ENCODE measurements at regions of chr1 and their contacts with region 1.

Region 1: DNA sequence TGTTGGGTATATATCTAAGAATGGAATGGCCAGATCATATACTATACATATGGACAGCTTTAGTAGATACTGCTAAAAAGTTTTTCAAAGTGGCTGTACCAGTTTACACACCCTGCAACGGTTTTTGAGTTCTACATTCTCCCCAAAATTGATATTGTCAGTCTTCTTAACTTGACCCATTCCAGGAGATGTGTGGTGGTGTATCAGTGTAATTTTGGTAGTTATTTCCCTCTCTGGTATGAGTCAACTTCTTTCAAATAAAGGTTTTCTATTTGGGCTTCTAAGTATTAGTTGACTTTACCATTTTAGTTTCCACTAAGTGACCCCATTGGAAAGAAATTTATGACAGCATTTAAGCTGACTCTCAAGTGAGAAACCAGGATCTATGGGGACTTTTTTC is 29.2 kb downstream of the INKA2 start:
- DNase-seq: no peak
- ATAC-seq: no peak
- H3K4me3 ChIP-seq: no peak overlapping the region
- H3K27ac ChIP-seq: no peak overlapping the region
- H3K4me1 ChIP-seq: peaks cover 0 to 4% (median 0%) of the 10 kb centered on the region in 12 donors
- H3K27me3 ChIP-seq: no peaks in the 10 kb centered on the region
- CTCF ChIP-seq: no peak
- POLR2A ChIP-seq: no peak

Region 2: DNA sequence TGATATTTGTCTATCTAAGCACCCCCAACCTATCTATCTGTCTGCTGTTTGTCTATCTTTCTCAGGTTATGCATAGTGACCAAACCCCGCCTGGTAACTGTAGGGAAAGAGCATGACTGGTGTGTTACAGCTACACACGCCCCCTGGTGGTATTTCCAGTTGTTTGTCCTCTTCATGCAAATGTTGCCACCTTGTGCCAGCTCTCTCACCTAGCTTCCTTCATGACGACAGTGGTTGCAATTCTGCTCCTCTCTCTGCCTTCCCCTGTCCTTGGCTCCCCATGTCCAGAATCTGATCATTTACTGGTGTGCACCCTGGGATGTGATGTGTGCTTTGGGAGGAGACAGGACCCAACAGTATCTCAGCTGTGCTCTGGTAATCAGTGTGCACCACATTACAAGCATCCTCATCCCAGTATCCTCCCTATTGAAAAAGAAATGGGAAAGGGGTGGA is 37.3 kb after region 1 on chr1:
- intact Hi-C with region 1: loop called in 5 of 10 experiments (anchors 1 to 5 kb)
- DNase-seq: peak in 4 of 5 donors; percentile 62 to 73 (median 64)
- ATAC-seq: peak in 3 of 4 donors; percentile 48 to 60 (median 51)
- H3K4me3 ChIP-seq: no peak overlapping the region
- H3K27ac ChIP-seq: no peak overlapping the region
- H3K4me1 ChIP-seq: peaks cover 0 to 37% (median 15%) of the 10 kb centered on the region in 12 donors
- H3K27me3 ChIP-seq: no peaks in the 10 kb centered on the region
- CTCF ChIP-seq: peak; percentile 49 to 73 (median 62)
- POLR2A ChIP-seq: no peak

Measured in heart left ventricle (tissue), 16 donors.